Mammary epithelial cell (primary cell): ENCODE measurements at regions of chr1 and their contacts with region 1.

Region 1: DNA sequence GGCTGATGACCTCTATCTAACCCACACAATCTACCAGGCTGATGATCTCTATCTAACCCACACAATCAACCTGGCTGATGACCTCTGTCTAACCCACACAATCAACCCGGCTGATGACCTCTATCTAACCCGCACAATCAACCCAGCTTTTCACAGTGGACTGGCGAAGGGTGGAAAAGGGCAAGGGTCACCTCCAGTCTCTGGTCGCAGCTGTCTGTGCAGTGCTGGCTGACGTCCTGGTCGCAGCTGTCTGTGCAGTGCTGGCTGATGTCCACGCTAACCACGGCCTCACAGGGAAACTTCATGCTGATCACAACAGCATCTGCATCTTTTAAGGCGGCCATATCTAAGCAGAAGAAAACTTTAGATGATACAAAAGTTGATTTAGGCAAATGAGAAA is 12.2 kb upstream of the CCDC27 start:
- DNase-seq: no peak
- H3K4me3 ChIP-seq: no peak overlapping the region
- H3K27ac ChIP-seq: no peak overlapping the region
- H3K4me1 ChIP-seq: no peaks in the 10 kb centered on the region
- H3K27me3 ChIP-seq: no peaks in the 10 kb centered on the region
- CTCF ChIP-seq: no peak

Region 2: DNA sequence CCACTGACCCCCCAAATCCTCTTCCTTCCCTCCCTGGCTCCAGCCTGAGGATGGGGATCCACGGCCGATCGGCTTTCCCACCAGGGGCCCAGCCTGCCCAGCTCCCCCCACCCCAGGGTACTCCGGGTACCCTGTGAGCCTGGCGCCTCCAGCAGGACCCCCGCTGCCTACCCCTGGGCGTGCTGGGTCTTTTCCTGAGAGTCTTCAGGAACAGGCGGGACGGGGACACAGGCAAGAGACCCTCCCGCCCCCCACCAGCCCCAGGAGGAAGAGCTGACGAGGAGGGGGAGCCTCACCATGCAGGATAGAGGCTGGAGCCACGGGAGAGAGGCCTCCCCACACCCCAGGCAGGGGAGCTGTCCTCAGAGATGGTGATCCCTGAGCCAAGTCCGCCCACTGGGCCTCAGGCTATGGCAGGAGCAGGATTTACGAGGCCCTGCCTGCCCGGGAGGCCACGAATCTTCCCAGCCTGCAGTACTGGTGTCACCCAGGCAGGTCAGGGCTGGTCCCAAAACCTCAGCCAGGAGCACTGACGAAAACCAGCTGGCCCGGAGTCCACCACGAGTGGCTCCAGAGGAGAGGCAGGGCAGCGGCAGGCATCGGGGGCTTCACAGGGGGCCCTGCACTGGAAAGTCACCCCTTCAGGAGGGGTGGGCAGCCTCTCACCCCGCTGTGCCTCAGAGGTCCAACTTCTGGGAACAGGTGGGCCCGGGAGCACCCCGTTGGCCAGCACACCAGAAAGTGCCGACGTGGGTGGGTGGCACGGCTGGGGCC is 186.7 kb before region 1 on chr1:
- CTCF ChIA-PET with region 1: no interaction called
- dilution Hi-C with region 1: loop called (anchors 5 kb)
- in situ Hi-C with region 1: no loop called
- intact Hi-C with region 1: no loop called
- DNase-seq: peak; percentile 81
- H3K4me3 ChIP-seq: peak overlapping the region in 1 of 3 experiments; percentile 10
- H3K27ac ChIP-seq: no peak overlapping the region
- H3K4me1 ChIP-seq: peaks cover 30% of the 10 kb centered on the region
- H3K27me3 ChIP-seq: peaks cover 14% of the 10 kb centered on the region
- CTCF ChIP-seq: no peak

Region 3: GRCh38 chr1:3624200-3625136 is 115.6 kb before region 1 on chr1 and contains the start of gene TPRG1L:
- CTCF ChIA-PET with region 1: no interaction called
- dilution Hi-C with region 1: loop called (anchors 5 kb)
- in situ Hi-C with region 1: no loop called
- intact Hi-C with region 1: no loop called
- DNase-seq: peak; percentile 94
- H3K4me3 ChIP-seq: peak within 1 kb of the TSS; percentile 75 to 100 (median 77)
- H3K27ac ChIP-seq: no peak within 1 kb of the TSS
- H3K4me1 ChIP-seq: peaks cover 18% of the 10 kb centered on the region
- H3K27me3 ChIP-seq: no peaks in the 10 kb centered on the region
- CTCF ChIP-seq: no peak
- total RNA-seq, gene TPRG1L: 44.2 to 48.6 TPM

Region 4: GRCh38 chr1:3674100-3675053 is 65.7 kb before region 1 on chr1:
- CTCF ChIA-PET with region 1: no interaction called
- dilution Hi-C with region 1: loop called (anchors 5 kb)
- in situ Hi-C with region 1: no loop called
- intact Hi-C with region 1: no loop called
- DNase-seq: no peak
- H3K4me3 ChIP-seq: peak overlapping the region in 2 of 3 experiments; percentile 24 to 35
- H3K27ac ChIP-seq: no peak overlapping the region
- H3K4me1 ChIP-seq: peaks cover 7% of the 10 kb centered on the region
- H3K27me3 ChIP-seq: no peaks in the 10 kb centered on the region
- CTCF ChIP-seq: no peak

Region 5: GRCh38 chr1:3785456-3786157 is 45.6 kb after region 1 on chr1:
- CTCF ChIA-PET with region 1: no interaction called
- dilution Hi-C with region 1: loop called (anchors 5 kb)
- in situ Hi-C with region 1: no loop called
- intact Hi-C with region 1: no loop called
- DNase-seq: peak; percentile 36
- H3K4me3 ChIP-seq: no peak overlapping the region
- H3K27ac ChIP-seq: no peak overlapping the region
- H3K4me1 ChIP-seq: no peaks in the 10 kb centered on the region
- H3K27me3 ChIP-seq: no peaks in the 10 kb centered on the region
- CTCF ChIP-seq: peak; percentile 42 to 53